ENCODE measurements at regions of chr18 and their contacts with region 1.

Region 1: DNA sequence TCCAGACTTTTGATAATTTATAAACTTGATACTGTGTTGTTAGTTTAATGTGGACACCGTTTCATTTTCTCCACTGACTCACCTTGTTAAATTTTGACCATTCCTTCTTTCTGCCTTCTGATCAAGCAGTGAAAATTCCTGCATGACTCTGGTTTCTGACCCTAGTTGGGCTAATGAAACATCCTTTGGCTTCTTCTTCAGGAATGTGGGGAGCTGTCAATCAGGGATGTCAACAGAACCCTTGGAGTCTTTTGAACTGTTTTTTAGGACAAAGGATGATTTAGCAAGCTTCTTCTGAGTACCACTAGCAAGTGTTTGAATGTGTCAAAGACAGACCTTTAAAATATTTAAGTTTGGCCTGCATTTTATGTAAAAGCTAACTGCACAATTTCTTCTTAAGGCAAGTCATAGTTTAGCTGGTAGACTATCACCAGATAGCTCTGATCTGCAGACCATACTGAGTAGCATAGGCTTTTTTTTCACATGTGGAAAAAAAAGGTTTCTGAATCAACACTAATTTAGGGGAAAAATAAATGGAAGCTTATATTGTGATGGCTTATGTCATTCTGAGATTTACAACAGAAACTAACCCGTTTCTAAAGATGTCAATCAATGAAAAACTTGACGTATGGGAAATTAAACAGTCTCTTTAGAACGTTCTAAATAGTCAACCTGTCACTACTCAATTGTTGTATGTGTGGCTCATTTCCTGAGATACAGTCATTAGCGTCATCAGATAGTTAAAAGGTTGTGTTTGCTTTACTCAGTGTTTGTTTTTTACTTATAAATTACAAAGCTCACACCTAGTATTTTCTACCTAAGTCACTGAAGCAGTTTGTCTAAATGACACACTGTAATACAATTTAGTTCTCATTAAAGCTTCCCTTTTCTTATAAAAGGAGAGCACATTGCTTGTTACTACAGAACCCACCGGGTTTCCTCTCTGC is 311.4 kb downstream of the PTPRM start:
- DNase-seq: peak in 1 of 2 experiments; percentile 74
- ATAC-seq: peak; percentile 69 to 73
- H3K4me3 ChIP-seq: no peak overlapping the region
- H3K27ac ChIP-seq: peak overlapping the region; percentile 89 to 100
- H3K4me1 ChIP-seq: peaks cover 80% of the 10 kb centered on the region
- CTCF ChIP-seq: no peak
- EP300 ChIP-seq: peak; percentile 33 to 52; a peak in 2 of 5 replicates
- POLR2A ChIP-seq: no peak
- RAD21 ChIP-seq: no peak

Region 2: DNA sequence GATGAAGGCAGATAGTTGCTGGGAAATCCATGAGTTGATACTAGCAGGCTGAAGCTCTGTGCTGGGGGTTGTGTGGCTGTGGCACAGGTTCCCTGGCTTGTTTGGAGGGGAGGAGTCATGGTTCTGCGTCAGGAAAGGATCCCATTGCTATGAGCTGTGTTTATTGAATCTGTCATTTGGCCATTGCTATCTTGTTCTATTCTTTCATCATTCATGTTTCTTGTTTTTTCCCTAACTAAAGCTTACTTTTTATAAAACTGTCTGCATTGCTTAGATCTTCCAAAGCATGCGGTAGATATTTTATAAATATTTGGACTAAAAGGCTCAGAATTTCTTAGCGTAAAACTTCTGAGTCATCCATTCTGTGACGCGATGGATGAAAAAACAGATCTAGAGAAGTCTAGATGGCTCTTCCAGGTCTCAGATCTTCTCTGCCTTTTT is 23.9 kb after region 1 on chr18:
- CTCF ChIA-PET with region 1: interaction called, 4 read pairs
- POLR2A ChIA-PET with region 1: interaction called, 18 read pairs
- DNase-seq: peak; percentile 55 to 91
- ATAC-seq: peak; percentile 98
- H3K4me3 ChIP-seq: no peak overlapping the region
- H3K27ac ChIP-seq: peak overlapping the region; percentile 95 to 99
- H3K4me1 ChIP-seq: peaks cover 74% of the 10 kb centered on the region
- CTCF ChIP-seq: no peak
- EP300 ChIP-seq: peak; percentile 93 to 94; a peak in 4 of 5 replicates
- POLR2A ChIP-seq: no peak
- RAD21 ChIP-seq: peak in 1 of 2 experiments; percentile 46; a peak in 3 of 5 replicates

Measured in A549 (cell line).